ENCODE measurements at regions of chr6 and their contacts with region 1.

Region 1: GRCh38 chr6:131199568-131200272 is 64.5 kb downstream of the AKAP7 start:
- DNase-seq: peak; percentile 63
- H3K4me3 Mint-ChIP-seq: no peak overlapping the region
- H3K27ac Mint-ChIP-seq: no peak overlapping the region
- H3K4me1 Mint-ChIP-seq: no peaks in the 10 kb centered on the region
- H3K27me3 Mint-ChIP-seq: no peaks in the 10 kb centered on the region
- CTCF ChIP-seq: peak; percentile 80

Region 2: DNA sequence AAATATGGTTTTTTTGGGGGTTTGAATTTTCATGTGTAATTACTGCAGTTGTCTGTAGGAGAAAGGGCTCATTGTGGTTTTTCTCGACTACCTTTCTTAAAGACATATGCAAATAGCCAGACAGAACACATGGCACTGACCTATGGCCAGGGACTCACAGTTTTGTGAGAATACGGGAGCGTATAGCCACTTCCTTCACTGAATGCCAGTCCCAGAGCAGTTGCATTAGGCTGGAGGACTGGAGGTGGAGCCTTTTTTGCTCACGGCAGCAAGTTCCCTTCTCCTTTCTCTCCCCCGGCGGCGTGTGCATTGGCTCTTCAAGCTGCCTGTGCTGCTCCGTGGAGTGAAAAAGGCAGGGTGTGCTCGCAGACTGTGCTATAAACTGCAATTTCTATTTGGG is 50.4 kb after region 1 on chr6:
- CTCF ChIA-PET with region 1: no interaction called
- intact Hi-C with region 1: loop called (anchors 10 kb)
- DNase-seq: peak; percentile 45
- H3K4me3 Mint-ChIP-seq: peak overlapping the region; percentile 66
- H3K27ac Mint-ChIP-seq: peak overlapping the region; percentile 24
- H3K4me1 Mint-ChIP-seq: peaks cover 28% of the 10 kb centered on the region
- H3K27me3 Mint-ChIP-seq: no peaks in the 10 kb centered on the region
- CTCF ChIP-seq: no peak